Endothelial cell of umbilical vein (primary cell): ENCODE measurements at regions of chr9 and their contacts with region 1.

Region 1: GRCh38 chr9:110744753-110745384 is 76.3 kb downstream of the MUSK start:
- DNase-seq: peak; percentile 89
- H3K4me3 ChIP-seq: no peak overlapping the region
- H3K27ac ChIP-seq: peak overlapping the region; percentile 77
- H3K4me1 ChIP-seq: peaks cover 59% of the 10 kb centered on the region
- H3K27me3 ChIP-seq: no peaks in the 10 kb centered on the region
- CTCF ChIP-seq: no peak
- POLR2A ChIP-seq: no peak

Region 2: GRCh38 chr9:109733690-109734089 is 1011.2 kb before region 1 on chr9:
- CTCF ChIA-PET with region 1: no interaction called
- POLR2A ChIA-PET with region 1: no interaction called
- dilution Hi-C with region 1: no loop called
- intact Hi-C with region 1: no loop called
- DNase-seq: no peak
- H3K4me3 ChIP-seq: no peak overlapping the region
- H3K27ac ChIP-seq: no peak overlapping the region
- H3K4me1 ChIP-seq: no peaks in the 10 kb centered on the region
- H3K27me3 ChIP-seq: peaks cover 0 to 2% of the 10 kb centered on the region in 2 experiments
- CTCF ChIP-seq: no peak
- POLR2A ChIP-seq: no peak

Region 3: DNA sequence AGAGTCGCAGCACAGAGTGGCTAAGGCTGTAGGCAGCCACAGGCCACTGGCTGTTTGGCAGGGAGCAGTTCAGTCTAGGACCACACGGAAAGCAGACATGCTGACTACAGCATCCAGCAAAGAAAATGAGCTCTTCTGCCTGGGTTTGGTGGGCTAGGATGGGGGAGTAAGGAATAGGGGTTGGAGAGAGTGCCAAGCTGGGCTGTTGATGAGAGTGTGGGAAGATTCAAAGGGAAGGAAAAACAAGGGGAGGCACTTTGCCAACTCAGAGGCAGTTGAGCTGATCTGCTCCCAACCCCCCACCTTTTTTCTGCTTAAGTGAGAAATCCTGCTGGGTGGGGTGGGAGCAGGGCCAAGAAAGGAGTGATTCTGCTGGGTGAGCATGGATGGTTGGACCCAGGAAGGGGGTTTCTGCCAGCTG is 201.2 kb before region 1 on chr9:
- CTCF ChIA-PET with region 1: no interaction called
- POLR2A ChIA-PET with region 1: no interaction called
- dilution Hi-C with region 1: no loop called
- intact Hi-C with region 1: no loop called
- DNase-seq: peak; percentile 6
- H3K4me3 ChIP-seq: no peak overlapping the region
- H3K27ac ChIP-seq: no peak overlapping the region
- H3K4me1 ChIP-seq: no peaks in the 10 kb centered on the region
- H3K27me3 ChIP-seq: no peaks in the 10 kb centered on the region
- CTCF ChIP-seq: no peak
- POLR2A ChIP-seq: no peak

Region 4: GRCh38 chr9:110650991-110651411 is 93.9 kb before region 1 on chr9:
- CTCF ChIA-PET with region 1: no interaction called
- POLR2A ChIA-PET with region 1: no interaction called
- dilution Hi-C with region 1: no loop called
- intact Hi-C with region 1: loop called (anchors 5 kb)
- DNase-seq: peak; percentile 80
- H3K4me3 ChIP-seq: no peak overlapping the region
- H3K27ac ChIP-seq: peak overlapping the region; percentile 53
- H3K4me1 ChIP-seq: peaks cover 6% of the 10 kb centered on the region
- H3K27me3 ChIP-seq: no peaks in the 10 kb centered on the region
- CTCF ChIP-seq: no peak
- POLR2A ChIP-seq: no peak

Region 5: DNA sequence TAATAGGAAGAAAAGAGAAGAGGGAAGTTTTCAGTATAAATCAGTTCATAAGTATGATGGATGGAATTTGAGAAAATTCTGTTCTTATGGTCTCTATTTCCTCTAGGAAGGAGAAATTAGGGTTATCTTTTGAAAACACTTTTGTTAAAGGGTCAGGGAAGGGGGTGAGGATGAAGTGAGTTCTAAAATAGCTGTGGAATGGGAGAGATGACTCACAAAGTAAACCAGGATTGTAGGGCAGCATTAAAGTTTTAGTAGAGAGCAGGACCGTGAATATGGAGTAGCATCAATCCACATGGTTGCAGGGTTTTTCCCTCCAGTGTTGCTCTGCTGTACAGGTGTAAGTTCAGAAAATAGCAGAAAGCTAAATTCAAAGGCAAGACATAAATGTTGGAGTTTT is 43.9 kb before region 1 on chr9:
- CTCF ChIA-PET with region 1: no interaction called
- POLR2A ChIA-PET with region 1: no interaction called
- dilution Hi-C with region 1: no loop called
- intact Hi-C with region 1: loop called (anchors 2 kb)
- DNase-seq: peak; percentile 65
- H3K4me3 ChIP-seq: no peak overlapping the region
- H3K27ac ChIP-seq: no peak overlapping the region
- H3K4me1 ChIP-seq: peaks cover 12% of the 10 kb centered on the region
- H3K27me3 ChIP-seq: no peaks in the 10 kb centered on the region
- CTCF ChIP-seq: no peak
- POLR2A ChIP-seq: no peak

Region 6: DNA sequence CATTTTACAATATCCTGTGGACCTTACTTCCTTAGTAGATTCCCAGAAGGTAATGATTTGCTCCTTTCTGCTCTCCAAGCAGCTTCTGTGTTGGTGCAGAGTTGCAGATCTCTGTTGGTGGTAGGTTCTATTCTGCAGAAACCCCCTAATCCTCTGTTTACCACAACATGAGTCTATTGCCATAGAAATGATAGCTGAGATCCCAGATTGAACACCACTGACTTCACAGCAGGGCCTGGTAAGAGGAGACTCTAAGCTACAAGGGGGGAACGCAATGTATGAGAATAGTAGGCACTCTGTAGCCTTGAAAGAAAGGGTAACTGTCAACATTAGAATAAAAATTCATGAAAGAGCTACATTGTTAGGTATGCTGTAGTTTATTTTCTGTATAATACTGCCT is 16.8 kb before region 1 on chr9:
- CTCF ChIA-PET with region 1: no interaction called
- POLR2A ChIA-PET with region 1: no interaction called
- dilution Hi-C with region 1: no loop called
- intact Hi-C with region 1: no loop called
- DNase-seq: no peak
- H3K4me3 ChIP-seq: no peak overlapping the region
- H3K27ac ChIP-seq: no peak overlapping the region
- H3K4me1 ChIP-seq: no peaks in the 10 kb centered on the region
- H3K27me3 ChIP-seq: no peaks in the 10 kb centered on the region
- CTCF ChIP-seq: no peak
- POLR2A ChIP-seq: no peak

Region 7: GRCh38 chr9:110777196-110777875 is 32.5 kb after region 1 on chr9:
- CTCF ChIA-PET with region 1: no interaction called
- POLR2A ChIA-PET with region 1: no interaction called
- dilution Hi-C with region 1: no loop called
- intact Hi-C with region 1: loop called (anchors 2 kb)
- DNase-seq: peak; percentile 68
- H3K4me3 ChIP-seq: no peak overlapping the region
- H3K27ac ChIP-seq: peak overlapping the region; percentile 20
- H3K4me1 ChIP-seq: peaks cover 20% of the 10 kb centered on the region
- H3K27me3 ChIP-seq: no peaks in the 10 kb centered on the region
- CTCF ChIP-seq: no peak
- POLR2A ChIP-seq: no peak

Region 8: DNA sequence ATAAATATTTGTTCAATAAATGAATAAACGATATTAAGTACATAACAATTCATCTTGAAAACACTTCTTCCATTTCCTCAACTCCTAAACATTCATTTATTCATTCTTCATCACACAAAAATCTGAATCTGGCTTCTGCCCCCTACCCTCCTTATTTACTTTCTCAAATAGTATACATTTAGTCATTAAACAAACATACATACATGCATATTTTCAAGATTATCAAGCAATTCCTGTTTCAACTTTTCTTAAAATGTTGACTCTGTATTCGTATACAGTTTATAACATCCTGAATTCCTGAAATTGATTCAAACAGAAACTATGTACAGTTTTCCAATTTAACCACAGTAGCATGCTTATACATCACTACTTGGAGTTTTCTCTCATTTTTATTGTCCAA is 52.7 kb after region 1 on chr9:
- CTCF ChIA-PET with region 1: no interaction called
- POLR2A ChIA-PET with region 1: no interaction called
- dilution Hi-C with region 1: no loop called
- intact Hi-C with region 1: loop called (anchors 5 kb)
- DNase-seq: peak; percentile 40
- H3K4me3 ChIP-seq: no peak overlapping the region
- H3K27ac ChIP-seq: no peak overlapping the region
- H3K4me1 ChIP-seq: peaks cover 12% of the 10 kb centered on the region
- H3K27me3 ChIP-seq: no peaks in the 10 kb centered on the region
- CTCF ChIP-seq: no peak
- POLR2A ChIP-seq: no peak

Region 9: DNA sequence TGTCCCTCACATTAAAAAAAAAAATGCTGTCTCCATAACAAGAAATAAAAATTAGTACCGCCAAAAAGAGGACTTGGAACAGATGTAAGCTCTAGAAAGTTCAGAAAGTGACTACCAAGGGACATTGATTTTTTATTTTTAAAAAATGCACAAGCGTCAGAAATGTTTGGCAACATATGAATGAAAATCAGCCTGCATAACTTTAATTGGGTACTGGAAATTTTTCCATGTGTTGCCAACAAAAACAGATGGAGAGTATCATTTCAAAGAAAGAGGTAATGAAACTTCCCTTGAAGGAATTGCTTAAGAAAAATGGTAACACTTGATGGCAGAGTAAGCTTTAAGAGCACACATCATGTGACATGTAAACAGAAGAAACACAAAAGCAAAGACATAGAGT is 538.0 kb after region 1 on chr9:
- CTCF ChIA-PET with region 1: no interaction called
- POLR2A ChIA-PET with region 1: no interaction called
- dilution Hi-C with region 1: no loop called
- intact Hi-C with region 1: no loop called
- DNase-seq: no peak
- H3K4me3 ChIP-seq: no peak overlapping the region
- H3K27ac ChIP-seq: no peak overlapping the region
- H3K4me1 ChIP-seq: no peaks in the 10 kb centered on the region
- H3K27me3 ChIP-seq: no peaks in the 10 kb centered on the region
- CTCF ChIP-seq: no peak
- POLR2A ChIP-seq: no peak